ENCODE measurements at regions of chr21 and their contacts with region 1.

Region 1: DNA sequence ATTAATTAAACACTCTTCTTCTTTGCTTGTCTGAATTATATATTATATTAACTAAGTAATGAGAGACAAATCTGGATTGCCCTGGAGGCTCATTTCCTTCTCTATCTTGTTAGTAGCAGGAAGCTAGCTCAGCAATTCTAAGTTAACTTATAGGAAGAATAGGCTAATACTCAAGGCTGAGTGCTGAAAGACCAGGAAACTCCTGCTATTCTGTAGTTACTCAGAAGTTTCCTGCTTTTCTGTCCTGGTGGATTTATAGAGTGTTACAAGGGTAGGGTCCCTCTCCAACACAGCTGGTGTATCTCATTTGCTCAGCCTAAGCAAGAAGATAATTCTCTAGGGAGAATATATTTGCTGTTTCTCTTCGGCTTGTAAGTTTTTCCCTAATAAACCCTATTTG is 29.2 kb downstream of the HSPA13 start:
- DNase-seq: no peak
- H3K4me3 ChIP-seq: no peak overlapping the region
- CTCF ChIP-seq: no peak
- POLR2A ChIP-seq: no peak

Region 2: DNA sequence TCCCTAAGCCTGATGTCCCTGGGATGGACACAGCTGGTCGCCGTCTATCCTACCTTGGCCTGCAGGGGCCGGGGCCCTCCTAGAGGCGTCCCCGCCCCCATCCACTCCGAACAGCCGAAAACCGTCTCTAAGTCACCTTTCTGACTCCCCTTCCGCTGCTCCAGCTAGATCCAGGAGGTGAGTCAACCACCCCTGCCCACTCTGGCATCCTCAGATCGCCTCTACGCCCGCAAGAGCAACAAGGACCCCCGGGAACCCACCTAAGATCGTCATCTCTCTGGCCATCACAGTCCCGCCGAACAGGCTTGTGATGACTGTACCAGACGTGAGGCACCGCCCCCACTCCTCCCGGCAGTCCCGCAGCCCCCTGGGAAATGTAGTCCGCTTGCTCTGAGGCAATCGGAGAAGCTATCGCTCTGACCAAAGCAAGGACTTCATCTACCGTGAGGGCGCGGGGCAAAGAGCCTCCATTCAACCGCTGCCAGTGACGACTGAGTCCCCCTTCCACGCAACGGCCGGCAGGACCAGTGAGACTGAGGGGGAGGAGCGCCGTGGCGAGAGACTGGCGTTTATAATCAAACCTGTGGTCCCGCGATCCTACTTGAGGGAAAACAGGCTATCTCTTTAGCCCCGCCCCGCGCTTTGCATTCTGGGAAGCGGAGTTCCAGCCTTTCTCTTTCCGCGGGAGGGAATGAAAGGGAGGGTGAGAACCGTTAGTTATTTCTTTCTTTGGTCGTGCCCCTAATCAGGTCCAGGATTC is 29.3 kb after region 1 on chr21 and contains the start of gene HSPA13:
- intact Hi-C with region 1: loop called (anchors 1 kb)
- DNase-seq: peak; percentile 100
- H3K4me3 ChIP-seq: peak within 1 kb of the TSS; percentile 94
- CTCF ChIP-seq: no peak
- POLR2A ChIP-seq: no peak
- total RNA-seq, gene HSPA13: 5.9 to 9.2 (median 7.1) TPM

Measured in lower leg skin (tissue), 4 donors.